Heart left ventricle (tissue), 16 donors: ENCODE measurements at regions of chr1 and their contacts with region 1.

Region 1: DNA sequence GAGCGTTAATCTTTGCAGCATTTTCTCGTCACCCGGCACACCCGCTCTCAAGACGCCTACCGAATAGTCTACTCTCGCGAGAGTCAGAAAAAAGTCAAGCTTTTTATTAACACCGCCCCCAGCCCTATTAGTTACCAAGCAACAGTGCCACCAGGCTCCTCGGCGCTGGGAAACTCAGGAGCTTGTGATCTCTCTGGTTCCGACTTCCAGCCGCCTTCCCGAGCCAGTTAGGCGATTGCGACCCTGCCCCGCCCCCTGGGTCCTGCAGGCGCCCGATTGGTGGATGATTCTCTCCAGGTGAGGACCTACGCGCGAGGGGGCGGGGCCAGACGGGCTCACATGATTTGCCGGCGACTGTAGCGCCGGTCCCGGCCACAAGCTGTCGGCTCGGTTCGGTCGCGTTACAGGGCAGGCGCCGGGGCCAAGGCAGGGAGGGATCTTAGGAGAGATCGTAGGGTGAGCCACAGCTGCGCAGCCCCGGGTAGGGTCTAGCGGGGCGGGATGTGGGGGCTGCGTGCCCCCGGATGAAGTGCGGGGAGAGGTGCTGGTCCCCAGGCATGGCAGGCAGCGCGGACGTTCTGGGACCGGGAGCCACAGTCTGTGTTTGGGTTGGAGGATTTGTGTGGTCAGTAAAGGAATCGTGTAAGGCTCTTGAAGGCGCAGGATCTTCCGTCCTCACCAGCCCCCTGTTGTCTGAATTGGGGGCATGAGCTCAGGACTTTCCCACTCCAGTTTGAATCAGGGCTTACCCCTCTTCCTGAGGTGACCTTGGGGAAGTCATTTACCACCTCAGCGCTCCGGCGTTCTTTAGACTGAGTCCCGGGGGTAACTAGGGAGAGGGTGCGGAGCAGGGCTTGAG is at the start of gene PFKFB2:
- DNase-seq: peak; percentile 96 to 98 (median 96)
- ATAC-seq: peak; percentile 85 to 93 (median 91)
- H3K4me3 ChIP-seq: peak within 1 kb of the TSS; percentile 37 to 83 (median 70)
- H3K27ac ChIP-seq: peak within 1 kb of the TSS; percentile 68 to 97 (median 92)
- H3K4me1 ChIP-seq: peaks cover 0 to 80% (median 40%) of the 10 kb centered on the region in 12 donors
- H3K27me3 ChIP-seq: no peaks in the 10 kb centered on the region
- CTCF ChIP-seq: peak in 5 of 12 donors; percentile 18 to 33 (median 22)
- POLR2A ChIP-seq: peak; percentile 83 to 95
- total RNA-seq, gene PFKFB2: 34.2 to 130 (median 64.0) TPM

Region 2: GRCh38 chr1:207077470-207078377 is 24.6 kb after region 1 on chr1:
- intact Hi-C with region 1: loop called in 5 of 10 experiments (anchors 1 to 2 kb)
- DNase-seq: peak in 3 of 5 donors; percentile 41 to 64 (median 63)
- ATAC-seq: peak; percentile 76 to 85 (median 82)
- H3K4me3 ChIP-seq: no peak overlapping the region
- H3K27ac ChIP-seq: peak overlapping the region in 6 of 12 donors; percentile 25 to 68 (median 46)
- H3K4me1 ChIP-seq: peaks cover 0 to 51% (median 11%) of the 10 kb centered on the region in 12 donors
- H3K27me3 ChIP-seq: no peaks in the 10 kb centered on the region
- CTCF ChIP-seq: peak; percentile 80 to 94 (median 89)
- POLR2A ChIP-seq: no peak

Region 3: GRCh38 chr1:207309775-207310273 is 256.7 kb after region 1 on chr1:
- intact Hi-C with region 1: loop called in 1 of 10 experiments (anchors 10 kb)
- DNase-seq: peak in 1 of 5 donors; percentile 49
- ATAC-seq: peak; percentile 65 to 88 (median 82)
- H3K4me3 ChIP-seq: peak overlapping the region in 11 of 12 donors; percentile 0 to 30 (median 19)
- H3K27ac ChIP-seq: peak overlapping the region; percentile 35 to 90 (median 71)
- H3K4me1 ChIP-seq: peaks cover 0 to 36% (median 18%) of the 10 kb centered on the region in 12 donors
- H3K27me3 ChIP-seq: no peaks in the 10 kb centered on the region
- CTCF ChIP-seq: no peak
- POLR2A ChIP-seq: no peak

Region 4: GRCh38 chr1:207355060-207355459 is 301.9 kb after region 1 on chr1:
- intact Hi-C with region 1: no loop called
- DNase-seq: no peak
- ATAC-seq: no peak
- H3K4me3 ChIP-seq: no peak overlapping the region
- H3K27ac ChIP-seq: no peak overlapping the region
- H3K4me1 ChIP-seq: peaks cover 0 to 8% (median 0%) of the 10 kb centered on the region in 12 donors
- H3K27me3 ChIP-seq: no peaks in the 10 kb centered on the region
- CTCF ChIP-seq: no peak
- POLR2A ChIP-seq: no peak